PC-9 (cell line): ENCODE measurements at regions of chr6 and their contacts with region 1.

Region 1: GRCh38 chr6:14066782-14067406 is 50.7 kb upstream of the CD83 start:
- DNase-seq: peak in 1 of 2 experiments; percentile 57
- H3K4me3 ChIP-seq: no peak overlapping the region
- H3K27ac ChIP-seq: no peak overlapping the region
- H3K4me1 ChIP-seq: peaks cover 26% of the 10 kb centered on the region
- H3K27me3 ChIP-seq: no peaks in the 10 kb centered on the region
- CTCF ChIP-seq: peak; percentile 86

Region 2: GRCh38 chr6:13624871-13625288 is 442.0 kb before region 1 on chr6:
- CTCF ChIA-PET with region 1: no interaction called
- POLR2A ChIA-PET with region 1: no interaction called
- intact Hi-C with region 1: loop called (anchors 10 kb)
- DNase-seq: no peak
- H3K4me3 ChIP-seq: no peak overlapping the region
- H3K27ac ChIP-seq: no peak overlapping the region
- H3K4me1 ChIP-seq: no peaks in the 10 kb centered on the region
- H3K27me3 ChIP-seq: no peaks in the 10 kb centered on the region
- CTCF ChIP-seq: peak; percentile 64

Region 3: GRCh38 chr6:14144678-14145113 is 77.8 kb after region 1 on chr6:
- CTCF ChIA-PET with region 1: interaction called, 5 read pairs
- POLR2A ChIA-PET with region 1: no interaction called
- intact Hi-C with region 1: loop called (anchors 1 kb)
- DNase-seq: peak in 1 of 2 experiments; percentile 65
- H3K4me3 ChIP-seq: no peak overlapping the region
- H3K27ac ChIP-seq: no peak overlapping the region
- H3K4me1 ChIP-seq: peaks cover 12% of the 10 kb centered on the region
- H3K27me3 ChIP-seq: no peaks in the 10 kb centered on the region
- CTCF ChIP-seq: peak; percentile 95